WTC11 (cell line): ENCODE measurements at regions of chr1 and their contacts with region 1.

Region 1: GRCh38 chr1:24150234-24151174 is 7.6 kb upstream of the IL22RA1 start:
- DNase-seq: peak; percentile 99
- ATAC-seq: peak; percentile 84
- H3K4me3 Mint-ChIP-seq: peak overlapping the region; percentile 63
- H3K27ac Mint-ChIP-seq: peak overlapping the region; percentile 99
- H3K4me1 Mint-ChIP-seq: peaks cover 46% of the 10 kb centered on the region
- H3K27me3 Mint-ChIP-seq: no peaks in the 10 kb centered on the region; the same call in 1 of the 2 replicates
- CTCF ChIP-seq: peak; percentile 88

Region 2: GRCh38 chr1:24070821-24071393 is 79.6 kb before region 1 on chr1:
- CTCF ChIA-PET with region 1: interaction called, 19 read pairs
- POLR2A ChIA-PET with region 1: interaction called, 8 read pairs
- DNase-seq: peak; percentile 85
- ATAC-seq: peak; percentile 91
- H3K4me3 Mint-ChIP-seq: peak overlapping the region; percentile 50
- H3K27ac Mint-ChIP-seq: no peak overlapping the region
- H3K4me1 Mint-ChIP-seq: peaks cover 6% of the 10 kb centered on the region; the same call in 1 of the 2 replicates
- H3K27me3 Mint-ChIP-seq: no peaks in the 10 kb centered on the region; the same call in 1 of the 2 replicates
- CTCF ChIP-seq: peak; percentile 77

Region 3: DNA sequence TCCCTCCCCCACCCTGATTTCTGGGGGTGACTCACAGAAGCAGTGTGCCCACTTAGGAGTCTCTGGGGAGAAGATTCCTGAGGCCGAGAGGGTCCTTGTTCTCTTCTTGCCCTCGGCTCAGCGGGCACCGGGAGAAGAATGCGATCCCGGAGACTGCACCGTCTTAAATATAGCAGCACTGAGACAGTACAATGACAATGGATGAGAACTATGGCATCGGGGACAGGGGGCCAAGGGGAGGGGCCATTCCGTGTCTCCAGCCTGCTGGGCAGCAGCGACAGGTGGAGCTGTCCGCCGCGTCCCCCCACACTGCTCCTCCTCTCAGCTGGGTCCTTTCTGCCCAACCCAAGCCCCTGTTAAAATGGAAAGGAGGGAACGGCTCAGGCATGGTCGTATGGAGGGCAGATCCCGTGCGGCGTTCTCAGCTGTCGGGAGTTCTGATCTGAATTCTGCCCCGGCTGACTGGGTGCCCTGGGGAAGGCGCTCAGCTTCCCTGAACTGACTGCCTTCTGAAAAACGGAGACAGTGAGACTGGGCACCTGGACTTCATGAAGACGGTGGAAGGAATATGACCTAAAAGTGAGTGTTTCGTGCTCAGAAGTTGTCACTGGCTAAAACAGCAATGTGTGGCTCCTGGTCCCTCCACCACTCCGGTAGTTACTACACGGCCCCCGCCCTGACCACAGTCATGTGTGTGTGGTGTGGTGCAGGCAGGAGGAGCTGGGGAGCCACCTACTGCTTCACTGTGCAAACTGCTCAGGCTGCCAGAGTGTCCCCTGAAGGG is 38.3 kb before region 1 on chr1 and contains the start of gene MYOM3:
- CTCF ChIA-PET with region 1: interaction called, 21 read pairs
- POLR2A ChIA-PET with region 1: interaction called, 6 read pairs
- DNase-seq: peak; percentile 65
- ATAC-seq: peak; percentile 88
- H3K4me3 Mint-ChIP-seq: peak within 1 kb of the TSS; percentile 29
- H3K27ac Mint-ChIP-seq: no peak within 1 kb of the TSS; the same call in none of the 2 replicates
- H3K4me1 Mint-ChIP-seq: peaks cover 32% of the 10 kb centered on the region
- H3K27me3 Mint-ChIP-seq: no peaks in the 10 kb centered on the region
- CTCF ChIP-seq: no peak
- total RNA-seq, gene MYOM3: 0.13 to 0.16 TPM (median 0.14 TPM) in 3 replicates

Region 4: GRCh38 chr1:24186993-24187805 is 36.7 kb after region 1 on chr1 and contains the start of gene IFNLR1:
- CTCF ChIA-PET with region 1: interaction called, 36 read pairs
- POLR2A ChIA-PET with region 1: interaction called, 8 read pairs
- DNase-seq: peak; percentile 80
- ATAC-seq: peak; percentile 87
- H3K4me3 Mint-ChIP-seq: peak within 1 kb of the TSS; percentile 78
- H3K27ac Mint-ChIP-seq: peak within 1 kb of the TSS; percentile 79
- H3K4me1 Mint-ChIP-seq: peaks cover 22% of the 10 kb centered on the region
- H3K27me3 Mint-ChIP-seq: no peaks in the 10 kb centered on the region; the same call in 1 of the 2 replicates
- CTCF ChIP-seq: no peak
- total RNA-seq, gene IFNLR1: 6.6 to 7.9 TPM (median 7.7 TPM) in 3 replicates

Region 5: GRCh38 chr1:24321697-24322469 is 171.4 kb after region 1 on chr1:
- CTCF ChIA-PET with region 1: interaction called, 10 read pairs
- POLR2A ChIA-PET with region 1: interaction called, 4 read pairs
- DNase-seq: peak; percentile 65
- ATAC-seq: peak; percentile 25
- H3K4me3 Mint-ChIP-seq: peak overlapping the region; percentile 86
- H3K27ac Mint-ChIP-seq: no peak overlapping the region
- H3K4me1 Mint-ChIP-seq: peaks cover 51% of the 10 kb centered on the region
- H3K27me3 Mint-ChIP-seq: peaks cover 46% of the 10 kb centered on the region
- CTCF ChIP-seq: no peak

Region 6: GRCh38 chr1:24403806-24404205 is 253.3 kb after region 1 on chr1:
- CTCF ChIA-PET with region 1: no interaction called
- POLR2A ChIA-PET with region 1: no interaction called
- DNase-seq: no peak
- ATAC-seq: no peak
- H3K4me3 Mint-ChIP-seq: no peak overlapping the region
- H3K27ac Mint-ChIP-seq: no peak overlapping the region
- H3K4me1 Mint-ChIP-seq: no peaks in the 10 kb centered on the region
- H3K27me3 Mint-ChIP-seq: no peaks in the 10 kb centered on the region
- CTCF ChIP-seq: no peak